ENCODE measurements at regions of chrX and their contacts with region 1.

Region 1: DNA sequence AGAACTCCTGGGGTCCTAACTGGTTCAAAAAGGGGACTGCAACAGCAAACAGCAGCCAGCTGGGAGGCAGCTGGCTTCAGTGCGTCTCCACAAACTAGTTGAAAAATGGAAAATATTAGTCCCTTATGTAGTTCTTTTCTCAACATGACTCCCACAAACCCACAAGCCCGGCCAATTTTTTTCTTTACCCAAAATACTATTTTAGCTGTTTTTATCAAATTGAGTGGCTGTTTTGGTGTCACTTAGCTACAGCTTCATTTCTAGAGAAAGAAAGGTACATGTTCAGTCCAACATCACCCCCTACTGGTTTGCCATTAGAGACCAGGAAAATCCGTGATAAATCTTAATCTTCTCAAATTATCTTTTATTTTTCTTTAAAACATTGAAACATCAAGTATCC is 97.2 kb downstream of the GUCY2F start:
- H3K4me3 Mint-ChIP-seq: no peak overlapping the region
- H3K27ac Mint-ChIP-seq: no peak overlapping the region
- H3K4me1 Mint-ChIP-seq: peaks cover 5% of the 10 kb centered on the region
- H3K27me3 Mint-ChIP-seq: peaks cover 4% of the 10 kb centered on the region

Region 2: GRCh38 chrX:108224727-108225621 is 1159.7 kb before region 1 on chrX:
- intact Hi-C with region 1: loop called (anchors 10 kb)
- H3K4me3 Mint-ChIP-seq: no peak overlapping the region
- H3K27ac Mint-ChIP-seq: no peak overlapping the region
- H3K4me1 Mint-ChIP-seq: no peaks in the 10 kb centered on the region
- H3K27me3 Mint-ChIP-seq: peaks cover 7% of the 10 kb centered on the region

Region 3: GRCh38 chrX:108584617-108585211 is 800.0 kb before region 1 on chrX:
- intact Hi-C with region 1: loop called (anchors 5 kb)
- H3K4me3 Mint-ChIP-seq: no peak overlapping the region
- H3K27ac Mint-ChIP-seq: no peak overlapping the region
- H3K4me1 Mint-ChIP-seq: no peaks in the 10 kb centered on the region
- H3K27me3 Mint-ChIP-seq: no peaks in the 10 kb centered on the region

Region 4: GRCh38 chrX:108701633-108702032 is 683.1 kb before region 1 on chrX:
- intact Hi-C with region 1: loop called (anchors 5 kb)
- H3K4me3 Mint-ChIP-seq: no peak overlapping the region
- H3K27ac Mint-ChIP-seq: no peak overlapping the region
- H3K4me1 Mint-ChIP-seq: no peaks in the 10 kb centered on the region
- H3K27me3 Mint-ChIP-seq: no peaks in the 10 kb centered on the region

Measured in dendritic cell treated with granulocyte-macrophage colony-stimulating factor and Interleukin-4, amounts not matched to agents 40 ng/mL and 50 ng/mL, for 4 days (primary cell).